ENCODE measurements at regions of chr16 and their contacts with region 1.

Region 1: GRCh38 chr16:70534971-70535370 is 11.4 kb downstream of the SF3B3 start:
- DNase-seq: no peak

Region 2: DNA sequence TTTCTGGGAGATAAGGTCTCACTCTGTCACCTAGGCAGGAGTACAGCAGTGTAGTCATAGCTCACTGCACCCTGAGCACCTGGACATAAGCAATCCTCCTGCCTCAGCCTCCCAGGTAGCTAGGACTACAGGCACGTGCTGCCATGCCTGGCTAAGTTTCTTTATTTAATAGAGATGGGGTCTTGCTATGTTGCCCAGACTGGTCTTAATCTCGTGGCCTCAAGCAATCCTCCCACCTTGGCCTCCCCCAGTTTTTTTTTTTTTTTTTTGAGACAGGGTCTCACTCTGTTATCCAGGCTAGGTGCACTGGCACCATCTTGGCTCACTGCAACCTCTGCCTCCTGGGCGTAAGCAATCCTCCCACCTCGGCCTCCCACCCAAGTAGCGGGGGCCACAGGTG is 214.8 kb before region 1 on chr16:
- intact Hi-C with region 1: no loop called
- DNase-seq: no peak

Region 3: DNA sequence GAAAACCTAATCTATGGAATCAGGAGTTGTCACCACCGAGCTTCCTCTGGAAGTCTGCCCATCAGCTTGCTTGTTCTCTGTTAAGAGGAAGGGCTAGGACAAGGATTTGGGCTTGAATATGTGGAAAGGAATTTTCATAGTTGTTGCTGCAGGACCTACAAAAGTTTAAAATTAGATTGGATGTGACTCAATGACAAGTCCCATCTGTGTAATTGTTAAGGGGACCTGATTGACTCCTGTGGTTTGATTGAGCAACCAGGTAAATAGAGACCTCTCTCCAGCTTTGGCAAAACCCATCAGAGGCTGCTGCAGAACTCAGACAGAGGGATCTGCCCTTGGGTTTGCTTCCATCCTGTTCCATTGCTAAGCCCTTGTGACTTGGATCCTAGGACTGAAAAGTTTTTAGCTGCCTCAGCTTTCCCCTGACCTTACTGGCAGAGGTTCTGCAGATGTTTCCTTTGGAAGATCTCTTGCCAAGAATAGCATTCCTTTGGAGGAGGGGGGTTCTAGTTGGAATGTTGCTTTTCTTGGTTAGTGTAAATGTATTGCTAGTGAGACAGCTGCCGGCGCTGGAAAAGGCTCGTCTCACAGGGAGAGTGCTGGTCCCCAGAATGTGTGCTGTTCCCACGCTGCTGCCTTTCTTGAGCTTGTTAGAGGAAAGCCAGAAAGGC is 38.6 kb after region 1 on chr16:
- intact Hi-C with region 1: loop called (anchors 5 kb)
- DNase-seq: peak; percentile 66

Measured in cardiac septum (tissue), 1 donor.